ENCODE measurements at regions of chr21 and their contacts with region 1.

Region 1: GRCh38 chr21:29523646-29524045 is 224.9 kb downstream of the BACH1 start:
- DNase-seq: no peak
- ATAC-seq: peak in 2 of 4 donors; percentile 50 to 70
- H3K4me3 ChIP-seq: no peak overlapping the region
- H3K27ac ChIP-seq: no peak overlapping the region
- H3K4me1 ChIP-seq: no peaks in the 10 kb centered on the region
- H3K27me3 ChIP-seq: no peaks in the 10 kb centered on the region
- CTCF ChIP-seq: no peak
- POLR2A ChIP-seq: no peak

Region 2: GRCh38 chr21:28587748-28588147 is 935.9 kb before region 1 on chr21:
- intact Hi-C with region 1: no loop called
- DNase-seq: no peak
- ATAC-seq: no peak
- H3K4me3 ChIP-seq: no peak overlapping the region
- H3K27ac ChIP-seq: no peak overlapping the region
- H3K4me1 ChIP-seq: no peaks in the 10 kb centered on the region
- H3K27me3 ChIP-seq: no peaks in the 10 kb centered on the region
- CTCF ChIP-seq: no peak
- POLR2A ChIP-seq: no peak

Region 3: DNA sequence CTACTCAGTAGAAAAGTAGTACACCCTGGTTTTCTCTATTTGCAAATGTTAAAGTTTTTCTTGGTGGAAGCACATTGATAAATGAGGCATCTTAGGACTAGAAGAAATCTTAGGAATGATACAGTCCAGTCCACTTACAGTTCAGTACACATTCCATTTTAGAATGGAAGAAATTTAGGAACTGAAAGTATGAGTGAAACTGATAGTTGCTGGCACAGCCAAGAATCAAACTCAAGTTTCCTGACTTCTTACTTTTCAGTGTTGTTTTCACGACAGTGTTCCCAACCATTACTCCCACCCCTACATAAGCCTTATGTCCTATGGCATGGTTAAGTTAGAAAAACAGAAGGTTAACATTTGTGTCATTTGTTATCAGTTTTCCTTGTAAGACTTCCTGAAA is 33.6 kb after region 1 on chr21:
- intact Hi-C with region 1: no loop called
- DNase-seq: no peak
- ATAC-seq: peak in 1 of 4 donors; percentile 37
- H3K4me3 ChIP-seq: no peak overlapping the region
- H3K27ac ChIP-seq: peak overlapping the region in 1 of 12 donors; percentile 59
- H3K4me1 ChIP-seq: no peaks in the 10 kb centered on the region
- H3K27me3 ChIP-seq: no peaks in the 10 kb centered on the region
- CTCF ChIP-seq: no peak
- POLR2A ChIP-seq: no peak

Region 4: DNA sequence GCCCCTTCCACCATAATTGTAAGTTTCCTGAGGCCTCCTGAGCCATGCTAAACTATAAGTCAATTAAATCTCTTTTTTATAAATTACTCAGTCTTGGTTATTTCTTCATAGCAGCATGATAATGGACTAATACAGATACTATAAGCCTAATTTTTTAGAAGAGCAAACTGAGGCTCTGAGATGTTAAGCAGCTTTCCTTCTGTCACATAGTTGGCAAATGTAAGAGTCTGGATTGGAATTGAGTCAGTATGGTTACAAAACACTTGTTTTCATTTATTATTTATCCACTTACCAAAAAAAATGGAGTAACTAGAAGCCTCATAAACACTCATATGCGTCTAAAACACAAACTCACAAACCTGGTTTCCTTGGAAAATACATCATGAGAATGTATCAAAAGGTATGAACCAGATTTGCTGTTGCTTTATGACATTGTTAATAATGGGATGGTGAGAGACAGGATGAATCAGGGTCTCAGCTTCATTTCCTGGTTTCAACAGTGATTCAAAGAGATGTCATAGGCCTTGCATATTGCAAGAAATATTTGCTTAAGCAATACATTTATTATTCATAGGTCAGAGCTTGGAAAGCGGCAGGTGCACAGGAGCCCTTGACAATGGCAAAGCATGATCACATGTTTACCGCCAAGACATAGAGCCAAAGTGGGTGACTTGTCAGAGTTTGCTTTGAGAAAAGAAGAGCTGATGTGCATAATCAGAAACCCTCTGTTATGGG is 194.6 kb after region 1 on chr21:
- intact Hi-C with region 1: loop called in 1 of 10 experiments (anchors 10 kb)
- DNase-seq: no peak
- ATAC-seq: peak in 1 of 4 donors; percentile 22
- H3K4me3 ChIP-seq: no peak overlapping the region
- H3K27ac ChIP-seq: no peak overlapping the region
- H3K4me1 ChIP-seq: no peaks in the 10 kb centered on the region
- H3K27me3 ChIP-seq: peaks cover 0 to 4% (median 0%) of the 10 kb centered on the region in 9 donors
- CTCF ChIP-seq: no peak
- POLR2A ChIP-seq: no peak

Measured in heart left ventricle (tissue), 16 donors.